OCI-LY7 (cell line): ENCODE measurements at regions of chr13 and their contacts with region 1.

Region 1: GRCh38 chr13:30443957-30444404 is 21.7 kb downstream of the UBE2L5 start:
- DNase-seq: peak; percentile 97
- H3K4me3 ChIP-seq: peak overlapping the region; percentile 87
- H3K27ac ChIP-seq: peak overlapping the region; percentile 98
- H3K4me1 ChIP-seq: peaks cover 72% of the 10 kb centered on the region
- CTCF ChIP-seq: no peak; the same call in 1 of the 2 replicates

Region 2: DNA sequence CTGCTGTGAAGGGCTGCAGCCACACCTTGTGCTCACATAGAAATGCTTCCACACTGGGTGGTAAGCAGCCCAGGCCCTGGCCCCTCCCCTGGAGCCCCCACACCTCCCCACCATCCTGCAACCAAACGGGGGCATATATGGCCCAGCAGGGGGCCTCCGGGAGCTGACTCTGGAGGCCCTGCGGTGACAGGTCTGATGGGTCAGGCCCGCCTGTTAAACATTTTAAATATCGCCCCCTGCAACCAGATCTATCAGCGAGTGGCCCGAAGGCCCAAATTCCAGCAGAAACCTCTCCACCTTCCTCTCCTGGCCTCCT is 88.6 kb before region 1 on chr13:
- CTCF ChIA-PET with region 1: interaction called, 3 read pairs
- POLR2A ChIA-PET with region 1: interaction called, 9 read pairs
- intact Hi-C with region 1: loop called (anchors 1 kb)
- DNase-seq: peak; percentile 84
- H3K4me3 ChIP-seq: peak overlapping the region; percentile 42
- H3K27ac ChIP-seq: peak overlapping the region; percentile 83
- H3K4me1 ChIP-seq: peaks cover 50% of the 10 kb centered on the region
- CTCF ChIP-seq: peak; percentile 91

Region 3: DNA sequence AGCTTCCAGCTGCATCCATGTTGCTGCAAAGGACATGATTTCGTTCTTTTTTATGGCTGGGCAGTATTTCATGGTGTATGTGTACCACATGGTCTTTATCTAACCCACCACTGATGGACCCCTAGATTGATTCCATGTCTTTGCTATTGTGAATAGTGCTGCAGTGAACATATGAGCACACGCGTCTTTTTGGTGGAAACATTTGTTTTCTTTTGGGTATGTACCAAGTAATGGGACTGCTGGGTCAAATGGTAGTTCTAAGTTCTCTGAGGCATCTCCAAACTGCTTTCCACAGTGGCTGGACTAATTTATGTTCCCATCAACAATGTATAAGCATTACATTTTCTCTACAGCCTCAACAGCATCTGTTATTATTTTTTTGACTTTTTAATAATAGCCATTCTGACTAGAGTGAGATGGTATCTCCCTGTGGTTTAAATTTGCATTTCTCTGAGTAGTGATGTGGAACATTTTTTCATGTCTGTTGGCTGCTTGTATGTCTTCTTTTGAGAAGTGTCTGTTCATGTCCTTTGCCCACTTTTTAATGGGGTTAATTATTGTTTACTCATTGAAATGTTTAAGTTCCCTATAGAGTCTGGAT is 28.5 kb before region 1 on chr13:
- CTCF ChIA-PET with region 1: interaction called, 3 read pairs
- POLR2A ChIA-PET with region 1: interaction called, 182 read pairs
- intact Hi-C with region 1: no loop called
- DNase-seq: peak; percentile 86
- H3K4me3 ChIP-seq: peak overlapping the region; percentile 48
- H3K27ac ChIP-seq: peak overlapping the region; percentile 92
- H3K4me1 ChIP-seq: peaks cover 84% of the 10 kb centered on the region
- CTCF ChIP-seq: no peak

Region 4: DNA sequence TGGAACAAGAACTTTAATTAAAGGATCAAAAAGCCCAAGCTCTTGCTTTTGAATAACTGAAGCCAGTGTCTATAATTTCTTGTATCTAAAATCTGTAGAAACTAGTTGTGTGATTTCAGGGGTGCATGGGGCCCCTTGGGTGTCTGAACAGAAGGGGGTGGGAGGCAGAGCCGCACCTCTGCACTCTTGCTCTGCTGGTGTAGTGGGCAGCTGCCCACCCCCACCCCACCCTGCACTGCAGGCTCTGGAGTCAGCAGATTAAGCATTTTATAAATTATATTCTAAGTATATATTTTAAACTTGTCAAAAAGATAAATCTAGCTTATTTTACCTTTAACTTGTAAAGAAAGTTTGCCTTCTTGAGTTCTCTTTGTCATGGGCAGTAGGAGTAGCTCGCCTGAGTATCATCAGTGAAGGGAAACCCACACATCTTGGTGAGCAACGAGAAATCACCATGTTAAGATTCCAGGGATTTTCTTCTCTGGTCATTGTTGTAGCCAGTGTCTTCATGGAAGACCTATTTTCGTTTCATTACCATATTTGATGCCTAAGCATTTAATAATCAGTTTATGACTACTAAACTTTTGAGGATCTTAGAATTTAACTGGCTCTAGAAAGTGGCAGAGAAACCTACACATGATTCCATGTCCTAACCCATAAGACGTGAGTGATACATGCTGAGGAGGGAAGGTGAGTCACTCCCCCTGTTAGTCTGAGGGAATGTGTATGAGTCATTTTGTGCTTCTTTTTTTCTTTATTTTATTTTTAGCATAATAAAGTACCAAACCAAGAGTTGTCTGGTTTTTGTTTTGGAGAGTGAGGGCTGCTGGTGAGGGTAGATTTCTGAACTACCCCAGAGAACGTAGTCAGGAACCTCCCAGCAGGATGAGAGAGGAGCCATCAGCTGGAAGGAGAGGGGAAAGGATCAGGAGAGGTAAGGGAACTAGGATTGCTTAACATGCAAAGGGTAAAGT is 14.0 kb before region 1 on chr13:
- CTCF ChIA-PET with region 1: interaction called, 6 read pairs
- POLR2A ChIA-PET with region 1: interaction called, 235 read pairs
- intact Hi-C with region 1: loop called (anchors 2 kb)
- DNase-seq: no peak
- H3K4me3 ChIP-seq: peak overlapping the region; percentile 57
- H3K27ac ChIP-seq: peak overlapping the region; percentile 83
- H3K4me1 ChIP-seq: peaks cover 67% of the 10 kb centered on the region
- CTCF ChIP-seq: no peak

Region 5: DNA sequence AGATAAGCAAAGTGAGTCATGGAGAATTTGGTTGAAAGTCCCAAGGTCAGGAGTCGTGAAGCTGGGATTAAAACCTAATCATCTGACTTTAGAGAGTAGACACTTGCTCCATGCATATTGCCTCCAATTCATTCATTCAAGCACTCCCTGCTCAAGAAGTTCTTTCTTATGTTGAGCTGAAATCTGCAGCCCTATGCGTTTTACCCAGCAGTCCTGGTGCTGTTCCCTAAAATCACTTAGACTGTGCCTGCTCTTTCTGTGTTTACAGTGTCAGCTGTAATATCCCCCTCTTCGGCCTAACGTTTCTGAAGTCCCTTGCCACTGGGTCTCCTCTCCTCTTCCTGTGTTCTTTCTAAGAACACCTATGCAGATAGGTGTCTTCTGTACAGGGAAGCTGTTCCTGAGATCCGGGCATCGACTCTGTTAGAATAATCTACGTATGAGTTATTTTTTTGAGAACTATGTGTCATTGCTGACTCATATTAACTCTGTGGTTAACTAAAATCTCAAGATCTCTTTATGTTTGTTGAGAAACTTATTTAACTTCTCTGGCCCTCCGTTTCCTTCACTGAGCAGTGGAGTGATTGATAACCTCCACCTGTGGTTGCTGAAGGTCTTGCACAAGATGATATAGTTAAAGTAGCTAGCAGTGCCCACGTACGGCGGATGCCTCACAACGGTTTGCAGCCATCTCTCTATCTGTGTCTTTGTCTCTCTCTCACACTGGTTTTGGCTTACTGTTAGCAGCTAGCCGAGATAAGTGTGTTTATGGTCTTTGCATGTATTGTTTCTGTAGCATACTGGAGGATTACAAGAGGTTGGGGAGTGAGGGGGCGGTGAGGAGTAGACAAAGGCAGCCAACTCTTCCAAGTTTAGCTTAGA is 296.0 kb after region 1 on chr13:
- CTCF ChIA-PET with region 1: no interaction called
- POLR2A ChIA-PET with region 1: interaction called, 5 read pairs
- intact Hi-C with region 1: loop called (anchors 10 kb)
- DNase-seq: peak; percentile 5
- H3K4me3 ChIP-seq: no peak overlapping the region
- H3K27ac ChIP-seq: no peak overlapping the region
- H3K4me1 ChIP-seq: peaks cover 57% of the 10 kb centered on the region
- CTCF ChIP-seq: no peak

Region 6: GRCh38 chr13:30978981-30979956 is 535.3 kb after region 1 on chr13:
- CTCF ChIA-PET with region 1: no interaction called
- POLR2A ChIA-PET with region 1: no interaction called
- intact Hi-C with region 1: no loop called
- DNase-seq: peak; percentile 60
- H3K4me3 ChIP-seq: no peak overlapping the region
- H3K27ac ChIP-seq: no peak overlapping the region
- H3K4me1 ChIP-seq: no peaks in the 10 kb centered on the region
- CTCF ChIP-seq: peak; percentile 89

Region 7: GRCh38 chr13:31159306-31159705 is 715.3 kb after region 1 on chr13:
- CTCF ChIA-PET with region 1: no interaction called
- POLR2A ChIA-PET with region 1: no interaction called
- intact Hi-C with region 1: no loop called
- DNase-seq: no peak
- H3K4me3 ChIP-seq: peak overlapping the region; percentile 91
- H3K27ac ChIP-seq: no peak overlapping the region
- H3K4me1 ChIP-seq: peaks cover 27% of the 10 kb centered on the region
- CTCF ChIP-seq: no peak